ENCODE measurements at regions of chr18 and their contacts with region 1.

Region 1: DNA sequence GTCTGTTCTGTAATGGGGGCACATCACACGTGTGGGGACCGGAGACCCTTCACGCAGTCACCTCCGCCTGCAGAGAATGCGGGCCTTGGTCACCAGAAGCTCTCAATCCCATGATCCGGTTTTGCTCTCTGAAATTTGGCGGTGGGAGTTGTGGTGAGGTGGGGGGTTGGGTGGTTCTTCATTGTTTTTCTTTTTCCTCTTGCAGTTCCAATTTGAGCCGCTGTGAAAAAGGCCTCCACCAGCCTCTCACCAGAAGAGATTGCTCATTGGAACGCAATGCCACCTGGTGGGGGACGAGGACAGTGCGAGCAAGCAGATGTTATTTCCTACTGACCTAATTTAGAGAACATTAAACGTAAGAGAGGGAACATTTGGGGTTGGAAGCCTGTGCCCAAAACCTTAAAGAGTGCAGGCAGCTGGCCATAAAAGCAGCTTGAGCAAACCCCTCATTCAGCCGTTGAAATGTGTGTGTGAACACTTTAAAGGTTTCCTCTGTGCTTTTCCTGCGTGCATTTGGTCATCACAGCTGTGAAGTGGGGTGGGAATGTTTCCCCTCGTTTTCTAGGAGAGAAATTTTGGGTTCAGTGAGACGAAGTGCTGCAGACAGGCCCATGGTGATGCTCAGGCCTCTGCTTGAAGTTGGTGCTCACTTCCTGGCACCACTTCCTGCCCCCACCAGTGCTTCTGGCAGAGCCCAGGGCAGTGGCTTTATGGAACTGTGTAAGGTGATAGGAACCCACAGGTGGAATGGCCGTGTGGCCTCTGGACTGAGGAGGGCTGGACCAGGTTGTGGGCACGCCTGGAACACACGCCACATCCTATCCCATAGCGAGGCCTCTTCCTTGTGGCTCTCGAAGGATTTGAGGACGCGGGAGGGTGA is 61.7 kb downstream of the ZCCHC2 start:
- DNase-seq: peak; percentile 97
- H3K4me3 ChIP-seq: peak overlapping the region in 2 of 4 donors; percentile 5 to 10
- H3K27ac ChIP-seq: peak overlapping the region; percentile 8 to 61 (median 50)
- H3K4me1 ChIP-seq: peaks cover 16 to 25% (median 23%) of the 10 kb centered on the region in 4 donors
- H3K27me3 ChIP-seq: no peaks in the 10 kb centered on the region
- CTCF ChIP-seq: peak; percentile 97 to 99 (median 97)
- EP300 ChIP-seq: no peak
- POLR2A ChIP-seq: no peak

Region 2: GRCh38 chr18:62186774-62187542 is 397.5 kb before region 1 on chr18 and contains the starts of genes PIGN and RELCH:
- intact Hi-C with region 1: loop called (anchors 10 kb)
- DNase-seq: peak; percentile 99
- H3K4me3 ChIP-seq: peak within 1 kb of the TSS; percentile 88 to 98 (median 94)
- H3K27ac ChIP-seq: peak within 1 kb of the TSS; percentile 78 to 89 (median 84)
- H3K4me1 ChIP-seq: peaks cover 30 to 60% (median 50%) of the 10 kb centered on the region in 4 donors
- H3K27me3 ChIP-seq: no peaks in the 10 kb centered on the region
- CTCF ChIP-seq: no peak
- EP300 ChIP-seq: no peak
- POLR2A ChIP-seq: peak; percentile 43
- total RNA-seq, gene PIGN: 10.6 to 16.9 (median 12.4) TPM
- total RNA-seq, gene RELCH: 15.9 to 17.9 (median 17.5) TPM

Region 3: DNA sequence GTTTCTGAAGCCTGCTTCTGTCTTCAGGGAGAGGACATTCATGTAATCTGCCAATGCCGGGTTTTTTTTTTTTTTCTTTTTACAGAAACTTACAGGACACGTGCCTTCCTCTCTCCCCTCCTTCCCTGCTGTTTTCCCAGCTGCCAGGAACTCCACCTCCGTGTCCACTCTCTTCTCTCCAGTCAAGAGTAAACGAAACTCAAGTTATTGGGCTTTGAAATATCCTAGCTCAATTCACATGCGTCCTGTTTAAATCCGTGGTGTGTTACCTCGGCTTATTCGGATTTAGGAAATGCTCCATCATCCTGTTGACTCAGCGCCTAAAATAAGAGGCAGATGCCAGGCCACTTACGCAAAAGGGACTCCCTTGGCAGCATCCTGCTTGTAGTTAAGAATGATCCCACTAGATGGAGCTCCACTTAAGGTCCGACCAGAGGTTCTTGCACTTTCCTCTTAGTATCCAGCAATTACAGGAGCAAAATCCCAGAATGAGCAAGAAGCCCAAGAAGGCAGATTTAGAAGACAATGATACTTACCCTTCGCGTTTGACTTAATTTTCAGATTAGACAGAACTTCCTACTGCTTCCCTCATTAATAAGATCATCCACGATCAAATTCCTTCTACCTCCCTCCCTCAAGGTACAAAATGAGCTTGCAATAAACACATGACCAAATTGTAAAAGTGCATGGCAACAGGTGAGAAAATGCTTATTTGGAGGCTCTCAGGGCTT is 158.9 kb before region 1 on chr18:
- intact Hi-C with region 1: loop called (anchors 5 kb)
- DNase-seq: peak; percentile 95
- H3K4me3 ChIP-seq: peak overlapping the region; percentile 39 to 51 (median 46)
- H3K27ac ChIP-seq: peak overlapping the region; percentile 79 to 85 (median 82)
- H3K4me1 ChIP-seq: peaks cover 11 to 17% (median 14%) of the 10 kb centered on the region in 4 donors
- H3K27me3 ChIP-seq: no peaks in the 10 kb centered on the region
- CTCF ChIP-seq: peak; percentile 88 to 91 (median 91)
- EP300 ChIP-seq: no peak
- POLR2A ChIP-seq: no peak

Region 4: DNA sequence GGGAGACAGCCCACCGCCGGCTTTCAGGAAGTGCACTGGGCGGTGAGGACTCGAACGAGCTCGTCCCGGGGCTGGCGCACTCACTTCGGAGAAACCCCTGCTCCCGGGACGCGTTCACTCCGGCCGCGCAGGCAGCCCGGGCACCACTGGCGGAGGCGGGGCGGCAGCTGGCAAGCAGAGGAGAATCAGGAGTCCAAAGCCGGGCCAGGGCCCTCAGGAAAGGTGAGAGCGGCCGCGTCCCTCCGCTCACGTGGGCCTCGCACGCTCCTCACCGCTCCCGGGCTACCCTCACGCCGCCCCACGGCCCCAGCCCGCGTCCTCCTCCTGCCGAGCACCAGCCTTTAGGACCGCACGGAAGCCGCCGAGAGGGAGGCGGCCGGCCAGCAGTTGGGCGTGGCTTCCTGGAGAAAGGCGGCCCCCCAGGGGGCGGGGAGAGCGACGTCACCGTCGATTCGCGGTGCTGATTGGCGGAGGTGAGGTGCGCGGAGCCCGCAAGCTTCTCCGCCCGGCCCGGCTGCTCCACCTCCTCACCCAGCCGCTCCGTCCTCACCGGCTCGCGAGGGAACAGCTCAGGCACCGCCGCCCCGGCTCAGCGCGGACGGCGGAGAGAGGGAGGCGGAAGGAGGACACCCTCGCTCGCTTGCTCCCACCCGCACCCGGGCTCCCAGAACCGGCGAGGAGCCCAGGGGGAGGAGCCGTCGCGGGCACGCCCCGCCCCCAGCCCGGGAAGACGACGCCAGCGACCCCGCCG is 61.8 kb before region 1 on chr18 and contains the start of gene ZCCHC2:
- intact Hi-C with region 1: loop called (anchors 5 kb)
- DNase-seq: peak; percentile 99
- H3K4me3 ChIP-seq: peak within 1 kb of the TSS; percentile 91 to 96 (median 94)
- H3K27ac ChIP-seq: peak within 1 kb of the TSS; percentile 95 to 99 (median 98)
- H3K4me1 ChIP-seq: peaks cover 22 to 39% (median 30%) of the 10 kb centered on the region in 4 donors
- H3K27me3 ChIP-seq: no peaks in the 10 kb centered on the region
- CTCF ChIP-seq: no peak
- EP300 ChIP-seq: no peak
- POLR2A ChIP-seq: peak; percentile 73
- total RNA-seq, gene ZCCHC2: 18.9 to 26.1 (median 23.8) TPM

Region 5: DNA sequence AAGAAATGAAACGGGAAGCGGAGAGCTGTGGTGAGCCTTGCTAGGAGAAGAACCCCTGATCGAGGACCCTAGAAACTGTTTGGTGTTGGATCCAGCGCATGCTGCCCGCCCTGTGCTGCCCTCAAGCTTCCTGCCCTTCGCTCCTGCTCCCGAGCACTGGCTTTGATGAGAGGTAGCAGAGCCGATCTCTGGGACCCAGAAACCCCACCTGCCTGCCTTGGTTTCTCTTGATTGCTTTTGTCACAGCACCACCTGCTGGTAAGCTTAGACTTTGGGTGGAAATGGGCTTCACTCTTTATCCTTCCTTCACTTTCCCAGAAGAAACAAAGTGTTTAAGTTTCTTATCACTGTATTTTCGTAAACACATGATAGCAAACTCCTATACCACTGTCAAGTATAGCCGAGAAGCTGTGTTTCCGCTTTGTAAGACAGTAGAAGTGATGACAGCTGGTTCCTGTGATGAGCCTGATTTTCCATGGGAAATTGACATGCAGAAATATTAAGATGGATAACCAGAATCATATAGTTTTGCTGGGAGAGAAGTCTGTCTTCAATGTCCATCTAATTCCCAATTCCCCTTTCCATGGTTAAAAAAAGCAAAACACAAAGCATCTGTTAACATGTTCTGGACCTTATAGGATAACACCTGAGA is 398.2 kb after region 1 on chr18:
- intact Hi-C with region 1: loop called (anchors 2 kb)
- DNase-seq: no peak
- H3K4me3 ChIP-seq: peak overlapping the region; percentile 42 to 53 (median 44)
- H3K27ac ChIP-seq: no peak overlapping the region
- H3K4me1 ChIP-seq: peaks cover 6 to 10% (median 8%) of the 10 kb centered on the region in 4 donors
- H3K27me3 ChIP-seq: no peaks in the 10 kb centered on the region
- CTCF ChIP-seq: peak; percentile 72 to 76 (median 73)
- EP300 ChIP-seq: no peak
- POLR2A ChIP-seq: no peak